AG04450 (cell line): ENCODE measurements at regions of chr18 and their contacts with region 1.

Region 1: DNA sequence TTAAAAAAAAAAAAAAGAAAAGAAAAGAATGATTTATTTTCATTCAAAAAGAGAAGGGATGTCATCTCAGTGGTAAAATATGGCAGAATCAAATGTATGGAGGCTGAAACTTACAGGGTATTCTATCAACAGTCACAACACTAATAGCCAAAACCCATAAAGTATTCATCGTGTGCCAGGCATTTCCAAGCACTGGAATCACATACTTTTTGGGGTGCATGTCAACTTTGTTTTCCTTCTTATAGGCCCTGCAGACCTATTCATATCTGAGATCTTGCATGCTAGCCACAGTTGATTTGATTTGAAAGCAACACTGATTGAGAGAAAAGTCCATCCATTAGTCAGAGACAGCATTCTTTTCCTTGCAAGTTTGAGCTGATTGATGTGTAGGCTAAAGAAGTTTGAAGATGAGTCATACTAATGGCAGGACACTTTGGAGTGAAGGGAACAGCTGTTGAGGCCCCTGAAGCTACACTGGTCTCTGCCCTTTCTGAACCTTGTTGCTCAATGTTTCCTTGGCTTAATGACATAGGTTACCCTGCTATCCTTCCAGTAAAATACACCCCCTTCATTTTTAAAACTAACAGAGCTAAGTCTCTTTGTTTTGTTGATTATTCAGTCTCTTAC is 22.0 kb downstream of the KATNAL2 start:
- DNase-seq: no peak
- H3K4me3 ChIP-seq: no peak overlapping the region
- H3K27ac ChIP-seq: no peak overlapping the region
- H3K27me3 ChIP-seq: no peaks in the 10 kb centered on the region
- CTCF ChIP-seq: no peak

Region 2: DNA sequence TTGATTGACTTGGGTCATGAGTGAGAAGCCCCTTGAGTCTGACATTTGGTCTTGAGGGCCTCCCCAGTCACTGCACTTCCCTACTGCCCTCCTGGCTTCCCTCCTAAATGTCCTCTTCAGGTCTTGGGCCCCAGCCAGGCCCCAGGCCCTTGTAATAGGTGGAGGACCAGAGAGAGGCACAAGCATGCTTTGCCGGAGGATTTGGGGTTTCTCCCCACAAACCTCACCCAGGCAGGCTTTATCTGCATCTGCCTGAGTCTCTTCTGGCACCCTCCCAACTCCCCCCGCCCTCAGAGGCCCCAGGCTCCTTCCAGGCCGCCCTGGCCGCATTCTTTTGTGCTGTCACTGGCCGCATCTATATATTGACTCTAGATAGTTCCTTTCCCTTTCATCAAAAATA is 564.6 kb before region 1 on chr18:
- CTCF ChIA-PET with region 1: no interaction called
- POLR2A ChIA-PET with region 1: no interaction called
- DNase-seq: no peak
- H3K4me3 ChIP-seq: no peak overlapping the region
- H3K27ac ChIP-seq: no peak overlapping the region
- H3K27me3 ChIP-seq: no peaks in the 10 kb centered on the region
- CTCF ChIP-seq: no peak

Region 3: DNA sequence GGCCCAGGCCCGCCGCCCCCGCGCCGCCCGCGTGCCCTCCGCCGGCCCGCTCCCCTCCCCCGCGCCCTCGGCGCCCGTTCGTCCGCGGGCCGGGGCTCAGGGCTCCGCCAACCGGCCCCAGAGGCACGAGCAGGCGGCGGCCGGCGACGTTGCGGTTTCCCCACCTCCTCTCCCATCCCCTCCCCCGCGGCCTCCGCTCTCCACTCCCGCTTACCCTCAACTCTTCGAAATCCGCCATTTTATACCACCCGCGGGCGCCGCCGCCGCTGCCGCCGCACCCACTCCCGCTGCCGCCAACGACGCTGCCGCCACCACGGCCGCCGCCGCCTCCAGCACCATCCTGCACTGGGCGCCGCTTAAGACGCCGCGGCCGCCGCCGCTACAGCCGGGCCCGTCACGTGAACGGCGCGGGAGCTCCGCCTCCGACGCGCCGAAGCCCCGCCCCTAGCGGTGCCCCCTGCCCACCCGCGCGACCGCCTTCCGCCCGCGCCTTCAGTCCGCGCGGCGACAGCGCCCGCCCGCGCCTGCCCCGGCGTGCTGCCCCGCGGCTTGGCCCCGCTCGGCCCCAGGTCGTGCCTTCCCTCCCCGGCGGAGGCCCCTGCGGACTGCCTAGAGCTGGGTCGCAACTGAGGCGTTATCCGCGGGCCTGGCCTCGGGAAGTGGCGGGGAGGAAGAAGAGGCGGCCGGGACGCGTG is 22.2 kb before region 1 on chr18 and contains the starts of genes KATNAL2 and PIAS2:
- CTCF ChIA-PET with region 1: no interaction called
- POLR2A ChIA-PET with region 1: interaction called, 12 read pairs
- DNase-seq: no peak
- H3K4me3 ChIP-seq: peak within 1 kb of the TSS; percentile 83
- H3K27ac ChIP-seq: peak within 1 kb of the TSS; percentile 47
- H3K27me3 ChIP-seq: no peaks in the 10 kb centered on the region
- CTCF ChIP-seq: no peak
- polyA plus RNA-seq, gene KATNAL2: 1.9 and 2.9 TPM in 2 replicates
- polyA plus RNA-seq, gene PIAS2: 10.0 and 10.1 TPM in 2 replicates